WTC11 (cell line): ENCODE measurements at regions of chr3 and their contacts with region 1.

Region 1: DNA sequence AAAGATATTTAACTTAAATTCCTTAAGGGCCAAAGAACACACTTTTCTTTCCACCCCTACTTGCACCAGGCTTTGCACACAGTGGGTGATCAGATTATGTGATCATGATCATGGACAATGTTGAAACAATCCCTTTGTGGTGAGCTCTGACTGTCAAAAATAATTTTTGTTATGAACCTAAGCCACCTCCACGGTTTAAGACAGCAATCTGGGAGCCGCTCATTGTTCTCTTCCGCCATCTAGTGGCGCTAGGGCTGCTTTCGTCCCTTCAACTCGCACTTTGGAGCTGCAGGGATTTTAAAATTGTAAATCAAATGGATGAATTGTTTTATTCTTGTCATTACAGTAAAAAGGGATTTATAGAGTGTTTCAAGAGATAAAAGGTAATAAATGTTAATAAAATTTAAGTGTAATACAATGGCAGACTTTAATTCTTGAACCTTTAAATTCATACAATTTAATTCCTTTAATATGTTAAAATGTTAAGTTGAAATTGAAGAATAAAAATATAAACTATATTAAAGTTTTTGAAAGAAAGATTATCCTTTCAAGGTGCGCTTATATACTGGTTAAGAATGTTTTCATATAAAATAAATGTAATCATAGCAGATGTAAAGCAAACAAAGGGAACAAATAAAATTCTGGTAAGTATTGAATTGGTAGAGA is 45.3 kb upstream of the ARL6 start:
- DNase-seq: peak; percentile 70
- ATAC-seq: peak; percentile 73; the same call in 1 of the 2 replicates
- H3K4me3 Mint-ChIP-seq: no peak overlapping the region
- H3K27ac Mint-ChIP-seq: no peak overlapping the region
- H3K4me1 Mint-ChIP-seq: peaks cover 18% of the 10 kb centered on the region
- H3K27me3 Mint-ChIP-seq: no peaks in the 10 kb centered on the region
- CTCF ChIP-seq: peak; percentile 51

Region 2: GRCh38 chr3:97656638-97657037 is 62.7 kb before region 1 on chr3:
- CTCF ChIA-PET with region 1: interaction called, 11 read pairs
- POLR2A ChIA-PET with region 1: no interaction called
- DNase-seq: no peak
- ATAC-seq: no peak
- H3K4me3 Mint-ChIP-seq: no peak overlapping the region
- H3K27ac Mint-ChIP-seq: no peak overlapping the region
- H3K4me1 Mint-ChIP-seq: peaks cover 26% of the 10 kb centered on the region
- H3K27me3 Mint-ChIP-seq: no peaks in the 10 kb centered on the region; the same call in 1 of the 2 replicates
- CTCF ChIP-seq: no peak

Region 3: DNA sequence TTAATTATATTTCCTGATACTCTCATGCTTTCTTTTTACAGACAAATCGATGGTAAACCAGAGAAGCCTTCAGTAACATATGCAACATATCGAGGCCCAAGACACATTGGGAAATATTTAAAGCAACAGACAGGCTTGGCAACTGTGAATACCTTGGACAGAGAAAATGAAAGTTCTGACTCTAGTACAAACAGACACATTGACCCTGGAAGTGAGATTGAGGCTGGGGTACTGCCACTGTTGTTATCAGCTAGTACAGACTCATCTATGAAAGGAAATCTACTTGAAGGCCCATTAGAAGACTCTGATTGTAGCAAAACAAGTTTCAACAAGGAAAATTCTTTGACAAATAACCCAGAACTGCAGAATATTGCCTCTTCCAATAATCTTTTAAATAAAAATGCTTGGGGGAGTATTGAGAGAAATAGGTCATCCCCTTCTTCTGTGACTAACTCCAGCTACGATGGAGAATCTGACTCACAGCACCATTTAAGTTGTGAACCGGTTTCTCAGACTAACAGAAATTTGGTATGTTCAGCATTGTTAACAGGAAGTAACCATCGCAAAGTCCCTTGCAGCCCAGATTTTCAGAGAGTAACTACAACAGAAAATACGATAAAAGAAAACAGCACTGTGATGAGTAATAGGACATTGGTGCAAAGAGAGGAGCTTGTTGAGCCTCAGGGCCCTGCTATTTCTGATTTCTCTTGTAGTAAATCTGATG is 152.7 kb after region 1 on chr3:
- CTCF ChIA-PET with region 1: no interaction called
- POLR2A ChIA-PET with region 1: no interaction called
- DNase-seq: no peak
- ATAC-seq: no peak
- H3K4me3 Mint-ChIP-seq: no peak overlapping the region
- H3K27ac Mint-ChIP-seq: no peak overlapping the region
- H3K4me1 Mint-ChIP-seq: no peaks in the 10 kb centered on the region
- H3K27me3 Mint-ChIP-seq: no peaks in the 10 kb centered on the region
- CTCF ChIP-seq: no peak